H1 (cell line): ENCODE measurements at regions of chr10 and their contacts with region 1.

Region 1: GRCh38 chr10:101161494-101162299 is 30.6 kb downstream of the TLX1 start:
- DNase-seq: peak; percentile 77 to 88
- H3K4me3 ChIP-seq: peak overlapping the region in 1 of 4 experiments; percentile 48; a peak in 4 of 8 replicates
- H3K27ac ChIP-seq: no peak overlapping the region
- H3K4me1 ChIP-seq: peaks cover 0 to 7% (median 1%) of the 10 kb centered on the region in 4 experiments; a peak in 1 of 7 replicates
- H3K27me3 ChIP-seq: peaks cover 0 to 13% (median 10%) of the 10 kb centered on the region in 4 experiments; a peak in 5 of 7 replicates
- CTCF ChIP-seq: peak; percentile 96 to 100 (median 97)
- EP300 ChIP-seq: 0 out of 3 replicates have a peak, but pooled peaks of 1 of the 2 experiments have one; percentile 17
- POLR2A ChIP-seq: no peak
- RAD21 ChIP-seq: peak; percentile 94 to 97

Region 2: DNA sequence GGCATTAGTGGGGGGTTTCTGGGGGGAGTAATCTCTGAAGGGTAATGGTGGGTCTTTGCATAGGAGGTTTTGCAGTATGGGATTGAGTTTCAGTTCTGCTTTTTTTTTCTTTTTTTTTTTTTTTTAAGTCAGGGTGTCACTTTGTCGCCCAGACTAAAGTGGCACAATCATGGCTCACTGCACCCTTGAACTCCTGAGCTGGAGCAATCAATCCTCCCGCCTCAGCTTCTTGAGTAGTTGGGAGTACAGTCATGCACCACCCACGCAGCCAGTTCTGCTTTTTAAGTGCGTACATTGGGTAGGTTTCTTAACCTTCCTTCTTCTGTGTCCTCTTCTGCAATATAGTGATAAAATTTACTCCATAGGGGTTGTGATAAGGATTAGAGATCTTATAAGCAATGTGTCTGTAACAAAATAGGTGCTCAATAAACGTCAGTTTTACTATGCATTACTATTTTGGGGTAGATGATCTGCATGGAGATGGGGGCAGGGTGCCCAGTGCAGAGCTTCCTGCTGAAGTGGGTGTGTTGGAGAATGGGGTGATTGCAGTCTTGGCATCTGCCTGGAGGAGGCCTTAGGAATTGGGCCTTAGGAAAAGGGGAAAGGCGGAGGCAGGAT is 90.3 kb before region 1 on chr10:
- CTCF ChIA-PET with region 1: no interaction called
- POLR2A ChIA-PET with region 1: no interaction called
- DNase-seq: no peak
- H3K4me3 ChIP-seq: no peak overlapping the region
- H3K27ac ChIP-seq: no peak overlapping the region
- H3K4me1 ChIP-seq: peaks cover 0 to 15% (median 5%) of the 10 kb centered on the region in 4 experiments; a peak in 6 of 7 replicates
- H3K27me3 ChIP-seq: peaks cover 11 to 55% (median 45%) of the 10 kb centered on the region in 4 experiments
- CTCF ChIP-seq: no peak
- EP300 ChIP-seq: no peak
- POLR2A ChIP-seq: no peak
- RAD21 ChIP-seq: no peak

Region 3: DNA sequence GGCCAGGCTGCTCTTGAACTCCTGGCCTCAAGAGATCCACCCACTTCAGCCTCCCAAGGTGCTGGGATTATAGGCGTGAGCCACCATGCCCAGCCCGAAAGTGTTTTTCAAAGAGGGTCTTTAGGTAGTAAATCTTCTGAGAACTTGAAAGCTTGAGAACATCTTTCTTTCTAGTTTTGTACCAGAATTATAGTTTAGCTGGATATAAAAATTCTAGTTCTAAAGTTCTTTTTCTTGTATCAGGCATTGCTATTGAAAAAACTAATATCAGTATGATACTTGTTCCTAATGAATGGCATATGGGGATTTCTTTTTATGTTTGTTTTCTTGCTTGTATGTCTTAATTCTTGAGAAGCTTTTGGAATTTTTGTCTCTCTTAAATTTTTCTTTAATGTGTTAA is 12.6 kb after region 1 on chr10:
- CTCF ChIA-PET with region 1: interaction called, 15 read pairs
- POLR2A ChIA-PET with region 1: interaction called, 4 read pairs
- DNase-seq: no peak
- H3K4me3 ChIP-seq: no peak overlapping the region
- H3K27ac ChIP-seq: no peak overlapping the region
- H3K4me1 ChIP-seq: no peaks in the 10 kb centered on the region
- H3K27me3 ChIP-seq: no peaks in the 10 kb centered on the region; a peak in 2 of 7 replicates
- CTCF ChIP-seq: no peak
- EP300 ChIP-seq: no peak
- POLR2A ChIP-seq: no peak
- RAD21 ChIP-seq: no peak

Region 4: GRCh38 chr10:101207026-101207425 is 45.3 kb after region 1 on chr10:
- CTCF ChIA-PET with region 1: interaction called, 39 read pairs
- POLR2A ChIA-PET with region 1: no interaction called
- DNase-seq: no peak
- H3K4me3 ChIP-seq: no peak overlapping the region
- H3K27ac ChIP-seq: no peak overlapping the region
- H3K4me1 ChIP-seq: no peaks in the 10 kb centered on the region
- H3K27me3 ChIP-seq: peaks cover 0 to 9% (median 5%) of the 10 kb centered on the region in 4 experiments; a peak in 5 of 7 replicates
- CTCF ChIP-seq: no peak
- EP300 ChIP-seq: no peak
- POLR2A ChIP-seq: no peak
- RAD21 ChIP-seq: no peak